Heart right ventricle (tissue), 16 donors: ENCODE measurements at regions of chr19 and their contacts with region 1.

Region 1: DNA sequence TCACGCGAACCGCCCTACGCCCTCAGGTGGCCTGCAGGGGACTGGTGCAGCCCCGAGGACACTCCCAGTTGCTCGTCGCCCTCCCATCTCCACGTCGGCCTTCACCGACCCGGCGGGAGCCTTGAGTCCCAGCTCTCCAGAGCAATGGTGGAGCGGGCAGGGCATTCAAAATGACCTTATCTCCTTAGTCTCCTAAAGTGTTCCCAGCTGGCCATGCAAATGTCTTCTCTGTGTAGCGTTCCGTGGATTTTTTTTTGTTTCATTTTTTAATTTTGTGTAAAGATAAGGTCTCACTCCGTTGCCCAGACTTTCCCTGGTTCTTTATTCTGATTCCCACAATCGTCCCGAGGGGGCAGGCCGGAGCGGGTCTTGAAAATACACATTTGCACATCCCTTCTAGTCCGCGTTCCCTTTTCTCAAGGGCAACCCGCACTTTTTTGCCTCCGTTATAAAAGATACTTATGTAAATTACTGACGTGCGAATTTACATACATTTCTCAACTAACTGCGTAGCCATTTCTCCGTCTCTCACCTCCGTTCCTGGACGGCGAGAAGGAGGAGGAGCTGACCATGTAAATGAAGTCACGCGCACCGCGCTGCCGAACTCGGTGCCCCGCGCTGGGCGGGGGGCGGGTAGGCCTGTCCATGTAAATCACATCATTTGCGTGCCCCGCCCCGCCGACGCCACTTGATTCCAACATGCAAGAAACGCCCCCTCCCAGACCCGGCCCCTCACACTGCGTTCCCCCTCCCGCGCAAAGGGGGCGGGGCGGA is 581 bp upstream of the EGLN2 start:
- DNase-seq: peak; percentile 100
- ATAC-seq: peak; percentile 5 to 92 (median 89)
- H3K4me3 ChIP-seq: peak overlapping the region; percentile 11 to 97 (median 83)
- H3K27ac ChIP-seq: peak overlapping the region; percentile 42 to 99 (median 96)
- H3K4me1 ChIP-seq: peaks cover 22 to 47% (median 42%) of the 10 kb centered on the region in 9 donors
- H3K27me3 ChIP-seq: no peaks in the 10 kb centered on the region
- CTCF ChIP-seq: peak in 8 of 9 donors; percentile 8 to 64 (median 42)

Region 2: DNA sequence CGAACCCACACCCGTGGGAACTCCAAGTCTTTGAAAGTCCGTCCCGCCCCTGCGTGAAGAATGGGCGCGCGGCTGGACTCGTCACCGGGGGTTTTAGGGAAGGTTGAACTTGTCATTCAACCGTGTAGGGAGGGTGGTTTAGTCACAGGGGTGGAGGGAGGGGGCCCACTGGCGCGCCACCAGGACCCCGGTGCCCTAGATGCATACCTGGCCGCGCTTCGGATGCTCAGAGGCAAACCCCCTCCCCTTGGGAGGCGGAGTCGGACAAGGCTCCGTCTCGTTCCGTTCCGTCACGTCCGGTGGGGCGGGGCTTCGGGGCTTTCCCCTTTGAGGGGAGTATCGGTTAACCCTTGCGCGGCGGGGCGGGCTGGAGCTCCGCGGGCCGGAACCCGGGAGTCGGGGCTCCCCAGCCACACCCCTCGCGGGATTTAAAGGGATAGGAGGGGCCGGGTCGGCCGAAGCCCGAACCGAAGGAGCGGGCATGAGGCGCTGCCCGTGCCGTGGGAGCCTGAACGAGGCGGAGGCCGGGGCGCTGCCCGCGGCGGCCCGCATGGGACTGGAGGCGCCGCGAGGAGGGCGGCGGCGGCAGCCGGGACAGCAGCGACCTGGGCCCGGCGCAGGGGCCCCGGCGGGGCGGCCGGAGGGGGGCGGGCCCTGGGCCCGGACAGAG is 81.6 kb before region 1 on chr19 and contains the starts of genes COQ8B and ITPKC:
- intact Hi-C with region 1: loop called in 3 of 10 experiments (anchors 2 to 10 kb)
- DNase-seq: peak; percentile 100
- ATAC-seq: peak; percentile 77 to 87 (median 84)
- H3K4me3 ChIP-seq: peak within 1 kb of the TSS; percentile 64 to 89 (median 78)
- H3K27ac ChIP-seq: peak within 1 kb of the TSS; percentile 87 to 98 (median 97)
- H3K4me1 ChIP-seq: peaks cover 16 to 83% (median 64%) of the 10 kb centered on the region in 9 donors
- H3K27me3 ChIP-seq: no peaks in the 10 kb centered on the region
- CTCF ChIP-seq: peak in 5 of 9 donors; percentile 16 to 44 (median 26)
- total RNA-seq, gene COQ8B: 17.9 to 34.3 (median 27.3) TPM
- total RNA-seq, gene ITPKC: 6.2 to 15.3 (median 9.1) TPM

Region 3: DNA sequence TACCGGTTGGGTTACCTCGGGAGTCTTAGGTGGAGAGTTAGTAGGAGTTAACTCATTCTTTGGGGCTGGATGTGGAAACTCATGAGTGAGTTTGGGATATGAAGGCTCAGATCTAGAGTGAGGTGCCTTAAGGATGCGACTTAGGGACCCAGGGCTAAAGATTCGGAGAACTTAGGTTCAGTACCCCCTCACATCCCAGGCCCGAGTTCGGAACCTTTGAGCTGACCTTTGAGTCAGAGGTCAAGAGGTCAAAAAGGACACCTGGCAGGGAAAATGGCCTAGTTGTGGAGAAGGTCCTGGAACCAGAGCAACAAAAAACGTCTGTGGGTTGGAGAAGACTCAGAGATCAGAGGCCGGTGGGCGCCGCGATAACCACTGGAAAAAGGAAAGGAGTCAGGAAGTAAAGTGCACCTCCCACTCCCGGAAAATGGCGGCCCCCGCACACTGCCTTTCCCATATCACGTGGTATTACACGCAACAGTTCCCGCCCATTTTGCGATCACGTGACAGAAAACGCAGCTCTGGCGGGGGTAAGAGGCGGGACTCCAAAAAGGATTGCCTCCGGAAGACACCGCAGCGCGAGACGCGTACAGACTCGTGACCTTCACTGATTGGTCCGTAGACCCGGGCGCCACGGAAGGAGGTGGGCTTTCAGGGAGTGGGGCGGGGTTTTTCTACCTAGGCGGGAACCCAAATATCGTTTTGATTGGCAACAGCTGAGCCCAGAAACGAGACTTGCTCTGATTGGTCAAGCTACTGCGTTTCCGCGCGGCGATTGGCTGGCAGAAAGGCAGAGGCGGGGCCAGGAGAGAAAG is 48.1 kb before region 1 on chr19 and contains the start of gene ACTMAP:
- intact Hi-C with region 1: loop called in 5 of 10 experiments (anchors 1 to 5 kb)
- DNase-seq: peak; percentile 98 to 100
- ATAC-seq: peak; percentile 95 to 98 (median 97)
- H3K4me3 ChIP-seq: peak within 1 kb of the TSS; percentile 56 to 92 (median 79)
- H3K27ac ChIP-seq: peak within 1 kb of the TSS; percentile 92 to 99 (median 95)
- H3K4me1 ChIP-seq: peaks cover 15 to 66% (median 47%) of the 10 kb centered on the region in 9 donors
- H3K27me3 ChIP-seq: no peaks in the 10 kb centered on the region
- CTCF ChIP-seq: no peak
- total RNA-seq, gene ACTMAP: 5.3 to 11.4 (median 8.4) TPM

Region 4: GRCh38 chr19:40777937-40778705 is 20.3 kb before region 1 on chr19 and contains the start of gene RAB4B:
- intact Hi-C with region 1: loop called in 5 of 10 experiments (anchors 1 to 2 kb)
- DNase-seq: peak; percentile 100
- ATAC-seq: peak; percentile 95 to 98 (median 97)
- H3K4me3 ChIP-seq: peak within 1 kb of the TSS; percentile 43 to 84 (median 74)
- H3K27ac ChIP-seq: peak within 1 kb of the TSS; percentile 89 to 100 (median 96)
- H3K4me1 ChIP-seq: peaks cover 7 to 25% (median 14%) of the 10 kb centered on the region in 9 donors
- H3K27me3 ChIP-seq: no peaks in the 10 kb centered on the region
- CTCF ChIP-seq: peak in 1 of 9 donors; percentile 22
- total RNA-seq, gene RAB4B: 11.0 to 25.2 (median 13.5) TPM

Region 5: GRCh38 chr19:40813182-40813958 is 15.0 kb after region 1 on chr19:
- intact Hi-C with region 1: loop called in 1 of 10 experiments (anchors 2 kb)
- DNase-seq: no peak
- ATAC-seq: no peak
- H3K4me3 ChIP-seq: no peak overlapping the region
- H3K27ac ChIP-seq: no peak overlapping the region
- H3K4me1 ChIP-seq: peaks cover 3 to 47% (median 34%) of the 10 kb centered on the region in 9 donors
- H3K27me3 ChIP-seq: no peaks in the 10 kb centered on the region
- CTCF ChIP-seq: no peak